Lower leg skin (tissue), 4 donors: ENCODE measurements at regions of chr9 and their contacts with region 1.

Region 1: DNA sequence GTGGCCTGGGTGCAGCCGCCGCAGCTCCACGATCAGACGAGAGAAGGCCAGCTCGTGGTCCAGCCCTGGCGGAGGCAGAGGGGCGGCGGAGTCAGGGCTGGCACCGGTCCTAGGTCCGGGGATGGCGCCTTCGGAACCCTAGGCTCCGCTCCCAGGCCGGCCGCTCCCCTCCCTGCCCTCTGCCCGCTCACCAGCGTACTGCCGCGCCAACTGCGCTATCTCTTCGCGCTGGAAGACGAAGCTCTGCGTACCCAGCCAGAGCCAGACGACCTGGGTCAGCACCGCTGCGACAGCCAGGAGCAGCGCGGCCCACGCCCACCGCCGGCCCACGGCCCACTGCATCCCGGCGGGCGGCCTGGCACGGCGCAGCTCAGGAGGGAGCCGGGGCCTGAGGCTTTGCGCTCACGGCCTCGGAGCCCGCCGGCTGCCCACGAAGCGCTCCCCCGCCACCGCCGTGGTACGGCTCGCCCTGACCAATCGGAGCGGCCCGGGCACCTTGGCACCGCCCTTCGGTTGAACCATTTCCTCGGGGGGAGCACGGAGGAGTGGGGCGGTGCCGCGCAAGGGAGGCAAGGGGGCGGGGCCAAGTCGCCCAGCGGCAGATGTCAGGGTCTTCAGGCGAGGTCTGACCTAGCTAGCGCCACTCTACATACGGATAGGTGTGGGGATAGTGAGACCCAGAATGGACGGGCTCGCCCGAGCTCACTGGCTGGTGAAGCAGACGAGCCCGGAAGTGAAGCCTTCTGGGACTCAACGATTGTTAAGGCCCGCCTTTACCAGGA is at the start of gene SIGMAR1:
- DNase-seq: peak; percentile 90 to 99
- H3K4me3 ChIP-seq: peak within 1 kb of the TSS; percentile 77
- CTCF ChIP-seq: no peak
- POLR2A ChIP-seq: no peak
- total RNA-seq, gene SIGMAR1: 99.1 to 130 (median 107) TPM

Region 2: GRCh38 chr9:34611829-34612630 is 25.5 kb before region 1 on chr9 and contains the start of gene RPP25L:
- intact Hi-C with region 1: no loop called
- DNase-seq: peak; percentile 78 to 95
- H3K4me3 ChIP-seq: peak within 1 kb of the TSS; percentile 43
- CTCF ChIP-seq: no peak
- POLR2A ChIP-seq: peak in 1 of 2 donors; percentile 24
- total RNA-seq, gene RPP25L: 17.0 to 39.0 (median 26.6) TPM

Region 3: DNA sequence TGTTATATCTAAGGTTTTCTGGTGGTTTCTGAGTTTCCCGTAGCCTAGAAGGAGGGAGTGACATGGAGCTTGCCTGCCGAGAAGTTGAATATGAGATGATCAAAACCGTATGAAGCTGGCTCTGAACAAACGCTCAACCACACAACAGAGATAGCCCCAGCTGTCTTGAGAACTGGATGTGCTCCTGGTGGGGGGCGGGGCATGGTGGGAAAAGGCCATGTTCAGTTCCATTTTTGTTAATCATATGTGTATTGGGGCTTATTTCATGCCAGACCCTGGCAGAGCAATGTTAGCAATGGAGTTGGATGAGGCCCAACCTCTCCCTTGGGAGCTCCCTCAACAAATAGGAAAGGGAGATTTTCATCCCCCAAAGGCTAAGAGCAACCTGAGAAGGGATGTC is 48.7 kb after region 1 on chr9:
- intact Hi-C with region 1: no loop called
- DNase-seq: no peak
- H3K4me3 ChIP-seq: no peak overlapping the region
- CTCF ChIP-seq: no peak
- POLR2A ChIP-seq: no peak

Region 4: GRCh38 chr9:34701769-34702736 is 64.5 kb after region 1 on chr9:
- intact Hi-C with region 1: loop called (anchors 10 kb)
- DNase-seq: peak; percentile 86 to 97
- H3K4me3 ChIP-seq: peak overlapping the region; percentile 29
- CTCF ChIP-seq: peak in 2 of 3 donors; percentile 78 to 94
- POLR2A ChIP-seq: no peak